A549 (cell line): ENCODE measurements at regions of chr9 and their contacts with region 1.

Region 1: DNA sequence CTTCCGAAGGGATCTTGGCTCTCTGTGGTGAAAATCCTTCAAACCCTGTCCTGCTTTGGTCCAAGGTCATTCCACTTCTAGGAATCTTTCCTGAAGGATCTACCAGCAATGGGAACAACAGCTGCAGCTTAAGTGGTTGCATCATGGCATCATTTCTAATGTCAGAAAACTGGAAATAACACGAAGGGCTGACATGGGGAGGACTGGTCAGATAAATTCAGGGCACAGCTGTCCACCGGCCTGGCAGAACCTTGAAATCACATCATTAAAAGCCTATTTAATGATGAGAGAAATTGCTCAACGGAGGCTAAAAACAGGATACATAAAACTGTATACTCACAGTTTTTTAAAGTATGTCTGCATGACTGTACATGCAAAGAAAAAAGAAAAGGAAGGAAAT is 28.3 kb downstream of the OLFML2A start:
- DNase-seq: no peak
- ATAC-seq: no peak
- H3K4me3 ChIP-seq: no peak overlapping the region
- H3K27ac ChIP-seq: no peak overlapping the region
- H3K4me1 ChIP-seq: peaks cover 2% of the 10 kb centered on the region
- CTCF ChIP-seq: no peak
- EP300 ChIP-seq: no peak
- POLR2A ChIP-seq: no peak
- RAD21 ChIP-seq: no peak

Region 2: GRCh38 chr9:124754289-124754688 is 50.9 kb before region 1 on chr9:
- CTCF ChIA-PET with region 1: no interaction called
- POLR2A ChIA-PET with region 1: no interaction called
- DNase-seq: peak in 1 of 2 experiments; percentile 40
- ATAC-seq: peak; percentile 76 to 90; a peak in 4 of 6 replicates
- H3K4me3 ChIP-seq: no peak overlapping the region
- H3K27ac ChIP-seq: no peak overlapping the region
- H3K4me1 ChIP-seq: peaks cover 33% of the 10 kb centered on the region
- CTCF ChIP-seq: peak; percentile 62
- EP300 ChIP-seq: no peak
- POLR2A ChIP-seq: no peak
- RAD21 ChIP-seq: peak; percentile 57 to 71

Region 3: DNA sequence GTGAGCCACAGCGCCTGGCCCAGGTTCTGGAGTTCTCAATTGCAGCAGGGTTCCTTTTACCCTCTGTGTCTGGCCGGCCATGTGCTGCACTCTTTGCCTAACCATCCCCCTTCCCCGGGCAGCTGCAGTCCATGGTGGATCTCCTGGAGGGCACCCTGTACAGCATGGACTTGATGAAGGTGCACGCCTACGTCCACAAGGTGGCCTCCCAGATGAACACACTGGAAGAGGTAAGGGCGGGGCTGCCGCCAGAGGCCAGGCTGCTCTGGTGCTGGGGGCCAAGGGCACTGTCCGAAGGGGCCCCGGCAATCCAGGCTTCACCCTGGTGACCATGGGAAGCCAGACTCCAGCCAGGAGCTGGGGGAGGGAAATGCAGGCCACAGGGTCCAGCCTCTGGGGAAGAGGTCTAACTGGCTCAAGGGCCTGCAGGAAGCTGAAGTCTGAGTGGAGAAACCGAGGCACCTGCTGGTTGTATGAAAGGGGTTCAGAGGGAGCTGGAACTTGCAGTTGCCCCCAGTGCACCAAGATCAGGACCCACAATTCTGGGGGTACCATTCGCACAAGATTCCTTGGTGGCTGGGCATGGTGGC is 10.2 kb before region 1 on chr9:
- CTCF ChIA-PET with region 1: interaction called, 13 read pairs
- POLR2A ChIA-PET with region 1: no interaction called
- DNase-seq: peak in 1 of 2 experiments; percentile 57
- ATAC-seq: peak; percentile 73 to 84; a peak in 5 of 6 replicates
- H3K4me3 ChIP-seq: no peak overlapping the region
- H3K27ac ChIP-seq: peak overlapping the region in 1 of 2 experiments; percentile 53; a peak in 2 of 6 replicates
- H3K4me1 ChIP-seq: 0 out of 3 replicates have a peak, but pooled peaks cover 8% of the 10 kb centered on the region
- CTCF ChIP-seq: 0 out of 3 replicates have a peak, but pooled peaks have one; percentile 9
- EP300 ChIP-seq: no peak
- POLR2A ChIP-seq: no peak
- RAD21 ChIP-seq: peak; percentile 31 to 52; a peak in 4 of 5 replicates